Astrocyte of the cerebellum (primary cell): ENCODE measurements at regions of chr2 and their contacts with region 1.

Region 1: DNA sequence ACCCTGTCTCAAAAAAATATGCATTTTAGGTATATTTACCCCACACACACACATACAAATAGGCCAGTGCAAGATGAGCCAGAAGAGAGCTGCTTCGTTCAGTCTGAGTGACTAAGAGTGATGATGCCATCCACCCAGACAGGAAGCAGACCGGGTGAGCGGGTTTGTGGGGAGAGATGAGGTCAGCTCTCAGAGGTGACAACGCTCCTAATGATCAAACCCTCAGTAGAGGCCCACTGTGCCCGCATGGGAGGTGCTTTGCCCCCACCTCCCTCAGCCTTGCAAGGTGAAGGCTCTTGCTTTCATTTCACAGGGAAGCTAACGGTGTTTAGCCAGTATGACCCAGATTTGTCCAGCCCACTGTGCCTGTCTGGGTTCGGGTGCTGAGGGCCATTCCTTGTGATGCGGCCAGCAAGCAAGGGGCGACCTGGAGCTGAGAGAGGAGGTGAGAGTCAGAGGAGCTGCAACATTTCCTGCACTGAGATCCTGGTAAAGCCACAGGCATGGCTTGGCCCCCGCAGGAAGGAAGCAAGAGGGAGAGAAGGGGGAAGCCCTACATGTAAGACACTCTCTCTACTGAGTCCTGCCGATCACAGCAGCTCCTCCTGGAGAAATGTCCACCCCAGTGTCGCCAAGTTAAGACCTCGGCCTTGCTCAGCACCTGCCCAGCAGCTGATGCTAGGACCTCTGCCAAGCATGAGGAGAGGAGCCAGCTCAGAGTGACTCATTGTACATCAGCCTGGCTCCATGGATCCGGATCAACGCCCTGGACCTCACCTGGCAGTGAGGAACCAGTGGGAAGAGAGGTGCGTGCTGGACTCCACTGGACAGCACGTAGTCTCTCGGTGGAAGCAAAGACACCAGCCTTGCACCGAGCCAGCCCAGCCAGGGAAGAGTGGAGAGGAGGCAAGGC is 37.0 kb downstream of the NIFK start:
- DNase-seq: no peak
- H3K4me3 ChIP-seq: no peak overlapping the region
- CTCF ChIP-seq: no peak

Region 2: DNA sequence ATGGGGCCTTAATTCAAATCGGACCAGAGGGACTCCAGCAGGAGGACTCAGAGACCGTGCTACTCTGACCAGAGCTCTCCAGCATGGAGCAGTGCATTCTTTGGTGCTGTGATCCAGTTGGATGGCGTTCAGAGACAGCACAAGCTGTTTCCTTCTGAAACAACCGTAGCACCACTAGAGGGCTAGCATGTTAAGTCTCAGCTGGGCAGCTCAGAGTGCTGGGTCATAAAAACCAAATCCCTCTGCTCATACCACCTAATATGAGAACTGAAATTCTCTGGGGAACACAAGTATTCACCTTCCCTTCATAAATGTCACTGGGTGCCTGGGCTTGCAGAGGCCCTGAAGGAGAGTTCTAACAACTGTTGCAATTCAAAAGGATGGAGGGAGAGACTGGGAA is 316.9 kb before region 1 on chr2:
- in situ Hi-C with region 1: loop called (anchors 25 kb)
- DNase-seq: no peak
- H3K4me3 ChIP-seq: no peak overlapping the region
- CTCF ChIP-seq: peak; percentile 34

Region 3: DNA sequence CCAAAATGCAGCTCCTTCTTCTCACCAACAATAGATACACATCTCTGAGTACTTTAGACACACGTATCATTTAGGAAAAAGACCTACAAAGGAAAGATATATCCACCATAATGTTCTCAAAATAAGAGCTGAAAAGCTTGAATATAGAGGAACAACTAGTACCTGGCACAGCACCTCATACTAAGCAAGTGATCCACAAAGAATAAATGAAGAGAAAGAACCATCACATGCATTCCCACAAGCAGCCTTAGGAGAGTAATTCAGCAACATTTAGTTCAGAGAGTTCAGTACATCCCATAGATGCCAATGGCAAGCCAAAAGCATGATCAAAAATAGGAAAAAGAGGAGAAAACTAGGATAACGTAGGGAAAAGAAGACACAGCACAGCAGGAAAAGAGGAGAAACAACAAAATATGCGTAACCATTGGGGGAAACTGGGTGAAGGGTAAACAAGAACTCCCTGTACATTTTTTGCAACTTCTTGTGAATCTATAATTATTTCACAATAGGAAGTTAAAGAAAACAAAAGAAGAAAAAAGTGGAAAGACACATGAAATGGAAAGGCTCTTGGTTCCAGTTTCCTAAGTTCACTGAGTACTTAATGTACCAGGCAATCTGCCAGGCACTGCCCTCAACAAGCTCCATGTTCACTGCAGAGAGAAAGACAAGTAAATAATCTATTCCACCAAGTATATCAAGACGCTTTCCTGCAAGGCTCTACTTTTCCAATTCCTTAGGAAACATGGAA is 72.7 kb before region 1 on chr2:
- in situ Hi-C with region 1: no loop called
- DNase-seq: peak; percentile 49
- H3K4me3 ChIP-seq: no peak overlapping the region
- CTCF ChIP-seq: no peak